A673 (cell line): ENCODE measurements at regions of chr22 and their contacts with region 1.

Region 1: GRCh38 chr22:37566903-37567820 is 6.9 kb downstream of the CDC42EP1 start:
- DNase-seq: peak; percentile 67
- H3K4me3 ChIP-seq: no peak overlapping the region
- H3K27ac ChIP-seq: no peak overlapping the region
- H3K4me1 ChIP-seq: no peaks in the 10 kb centered on the region
- H3K27me3 ChIP-seq: no peaks in the 10 kb centered on the region
- CTCF ChIP-seq: peak; percentile 97

Region 2: GRCh38 chr22:37316875-37317371 is 250.2 kb before region 1 on chr22:
- CTCF ChIA-PET with region 1: no interaction called
- POLR2A ChIA-PET with region 1: no interaction called
- intact Hi-C with region 1: loop called (anchors 10 kb)
- DNase-seq: peak; percentile 74
- H3K4me3 ChIP-seq: no peak overlapping the region
- H3K27ac ChIP-seq: no peak overlapping the region
- H3K4me1 ChIP-seq: no peaks in the 10 kb centered on the region
- H3K27me3 ChIP-seq: no peaks in the 10 kb centered on the region
- CTCF ChIP-seq: peak; percentile 87

Region 3: GRCh38 chr22:37472418-37473006 is 94.7 kb before region 1 on chr22:
- CTCF ChIA-PET with region 1: interaction called, 11 read pairs
- POLR2A ChIA-PET with region 1: no interaction called
- intact Hi-C with region 1: no loop called
- DNase-seq: peak; percentile 42
- H3K4me3 ChIP-seq: no peak overlapping the region
- H3K27ac ChIP-seq: no peak overlapping the region
- H3K4me1 ChIP-seq: no peaks in the 10 kb centered on the region
- H3K27me3 ChIP-seq: no peaks in the 10 kb centered on the region
- CTCF ChIP-seq: peak; percentile 65

Region 4: GRCh38 chr22:37511395-37512104 is 55.6 kb before region 1 on chr22:
- CTCF ChIA-PET with region 1: interaction called, 10 read pairs
- POLR2A ChIA-PET with region 1: no interaction called
- intact Hi-C with region 1: no loop called
- DNase-seq: no peak
- H3K4me3 ChIP-seq: no peak overlapping the region
- H3K27ac ChIP-seq: no peak overlapping the region
- H3K4me1 ChIP-seq: peaks cover 6% of the 10 kb centered on the region
- H3K27me3 ChIP-seq: no peaks in the 10 kb centered on the region
- CTCF ChIP-seq: no peak